MCF 10A (cell line): ENCODE measurements at regions of chr11 and their contacts with region 1.

Region 1: DNA sequence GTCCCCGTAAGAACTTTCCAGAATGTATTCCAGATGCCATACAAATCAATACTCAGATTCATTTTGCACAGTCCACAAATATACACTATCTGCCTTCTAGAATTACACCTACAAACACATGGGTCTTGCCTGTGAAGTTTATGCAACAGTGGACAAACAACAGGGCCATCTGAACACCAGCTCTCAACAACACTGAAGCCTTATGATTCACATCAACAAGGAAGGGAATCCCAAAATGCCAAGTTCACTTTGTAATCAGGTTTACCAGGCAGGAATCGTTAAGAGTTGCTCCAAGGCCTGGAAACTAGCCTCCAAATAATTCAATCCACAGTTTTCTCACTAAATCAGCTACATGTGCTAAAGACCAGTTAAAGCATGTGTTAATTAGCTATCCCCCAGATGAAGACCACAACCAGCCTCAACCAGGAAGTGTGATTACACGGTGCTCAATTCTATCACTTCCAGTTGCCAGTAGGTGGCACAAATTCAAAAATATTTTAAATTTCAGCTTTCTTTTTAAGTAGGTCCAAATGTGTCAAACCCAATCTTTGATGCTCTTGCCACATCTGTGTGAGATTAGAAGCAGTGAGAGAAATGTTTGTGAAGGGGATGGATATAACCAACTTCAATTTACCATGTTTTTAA is 139.1 kb upstream of the BDNF start:
- DNase-seq: peak; percentile 28
- H3K4me3 Mint-ChIP-seq: no peak overlapping the region
- H3K27ac Mint-ChIP-seq: peak overlapping the region; percentile 67
- H3K4me1 Mint-ChIP-seq: peaks cover 7% of the 10 kb centered on the region
- H3K27me3 Mint-ChIP-seq: no peaks in the 10 kb centered on the region
- CTCF ChIP-seq: peak; percentile 43

Region 2: GRCh38 chr11:28107748-28108618 is 268.6 kb after region 1 on chr11 and contains the starts of genes KIF18A and METTL15:
- CTCF ChIA-PET with region 1: interaction called, 9 read pairs
- POLR2A ChIA-PET with region 1: interaction called, 10 read pairs
- intact Hi-C with region 1: loop called (anchors 2 kb)
- DNase-seq: peak; percentile 98
- H3K4me3 Mint-ChIP-seq: peak within 1 kb of the TSS; percentile 98
- H3K27ac Mint-ChIP-seq: peak within 1 kb of the TSS; percentile 100
- H3K4me1 Mint-ChIP-seq: peaks cover 48% of the 10 kb centered on the region
- H3K27me3 Mint-ChIP-seq: no peaks in the 10 kb centered on the region
- CTCF ChIP-seq: no peak
- total RNA-seq, gene KIF18A: 8.9 and 12.9 TPM in 2 replicates
- total RNA-seq, gene METTL15: 16.8 and 19.9 TPM in 2 replicates

Region 3: DNA sequence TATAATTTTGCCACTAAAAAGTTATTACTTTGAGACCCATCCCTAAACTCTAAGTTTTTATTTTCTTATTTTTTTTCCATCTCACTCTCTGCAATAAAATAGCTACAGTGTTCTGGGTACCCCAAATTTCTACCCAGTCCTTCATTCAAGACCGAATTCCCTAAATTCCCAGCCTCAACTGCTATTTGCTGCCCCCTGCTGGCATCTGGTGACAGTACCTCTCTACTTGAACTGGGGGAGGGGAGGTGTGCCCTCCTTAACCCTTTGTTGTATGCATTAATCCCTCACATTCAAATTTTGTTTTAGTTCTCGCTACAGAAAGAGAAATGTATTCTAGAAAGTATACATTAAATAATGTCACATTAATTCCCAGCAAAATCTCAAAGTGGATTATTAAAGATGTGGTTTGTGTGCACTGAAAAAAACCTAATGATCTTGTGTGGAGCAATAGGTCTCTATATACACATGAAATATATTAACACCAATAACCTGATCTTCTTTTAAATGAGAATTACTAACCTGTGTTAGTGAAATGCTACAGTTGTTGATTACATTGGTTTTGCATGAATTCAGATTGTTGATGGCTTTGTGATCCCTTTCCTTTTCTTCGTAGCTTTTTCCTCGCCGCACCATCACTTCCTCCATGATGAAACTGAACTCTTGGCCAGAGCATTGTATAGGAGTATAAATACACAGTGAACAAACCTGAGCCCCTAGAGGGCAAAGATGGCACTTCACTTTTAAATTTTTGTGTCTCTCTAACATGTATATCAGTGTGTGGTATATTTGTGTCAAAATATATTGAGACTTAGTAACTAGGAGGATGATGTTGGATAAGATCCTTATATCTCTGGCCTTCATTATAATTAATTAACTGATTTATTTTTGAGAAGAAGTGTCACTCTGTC is 858.8 kb after region 1 on chr11:
- CTCF ChIA-PET with region 1: interaction called, 4 read pairs
- POLR2A ChIA-PET with region 1: no interaction called
- intact Hi-C with region 1: loop called (anchors 5 kb)
- DNase-seq: peak; percentile 79
- H3K4me3 Mint-ChIP-seq: no peak overlapping the region
- H3K27ac Mint-ChIP-seq: peak overlapping the region; percentile 36
- H3K4me1 Mint-ChIP-seq: peaks cover 41% of the 10 kb centered on the region
- H3K27me3 Mint-ChIP-seq: no peaks in the 10 kb centered on the region
- CTCF ChIP-seq: peak; percentile 76

Region 4: GRCh38 chr11:29159552-29160465 is 1320.5 kb after region 1 on chr11:
- CTCF ChIA-PET with region 1: interaction called, 3 read pairs
- POLR2A ChIA-PET with region 1: no interaction called
- intact Hi-C with region 1: loop called (anchors 1 kb)
- DNase-seq: peak; percentile 80
- H3K4me3 Mint-ChIP-seq: no peak overlapping the region
- H3K27ac Mint-ChIP-seq: no peak overlapping the region
- H3K4me1 Mint-ChIP-seq: peaks cover 11% of the 10 kb centered on the region
- H3K27me3 Mint-ChIP-seq: no peaks in the 10 kb centered on the region
- CTCF ChIP-seq: peak; percentile 77

Region 5: GRCh38 chr11:29333993-29334775 is 1494.8 kb after region 1 on chr11:
- CTCF ChIA-PET with region 1: interaction called, 7 read pairs
- POLR2A ChIA-PET with region 1: no interaction called
- intact Hi-C with region 1: loop called (anchors 10 kb)
- DNase-seq: peak; percentile 56
- H3K4me3 Mint-ChIP-seq: no peak overlapping the region
- H3K27ac Mint-ChIP-seq: no peak overlapping the region
- H3K4me1 Mint-ChIP-seq: peaks cover 3% of the 10 kb centered on the region
- H3K27me3 Mint-ChIP-seq: no peaks in the 10 kb centered on the region
- CTCF ChIP-seq: peak; percentile 50